ENCODE measurements at regions of chr21 and their contacts with region 1.

Region 1: DNA sequence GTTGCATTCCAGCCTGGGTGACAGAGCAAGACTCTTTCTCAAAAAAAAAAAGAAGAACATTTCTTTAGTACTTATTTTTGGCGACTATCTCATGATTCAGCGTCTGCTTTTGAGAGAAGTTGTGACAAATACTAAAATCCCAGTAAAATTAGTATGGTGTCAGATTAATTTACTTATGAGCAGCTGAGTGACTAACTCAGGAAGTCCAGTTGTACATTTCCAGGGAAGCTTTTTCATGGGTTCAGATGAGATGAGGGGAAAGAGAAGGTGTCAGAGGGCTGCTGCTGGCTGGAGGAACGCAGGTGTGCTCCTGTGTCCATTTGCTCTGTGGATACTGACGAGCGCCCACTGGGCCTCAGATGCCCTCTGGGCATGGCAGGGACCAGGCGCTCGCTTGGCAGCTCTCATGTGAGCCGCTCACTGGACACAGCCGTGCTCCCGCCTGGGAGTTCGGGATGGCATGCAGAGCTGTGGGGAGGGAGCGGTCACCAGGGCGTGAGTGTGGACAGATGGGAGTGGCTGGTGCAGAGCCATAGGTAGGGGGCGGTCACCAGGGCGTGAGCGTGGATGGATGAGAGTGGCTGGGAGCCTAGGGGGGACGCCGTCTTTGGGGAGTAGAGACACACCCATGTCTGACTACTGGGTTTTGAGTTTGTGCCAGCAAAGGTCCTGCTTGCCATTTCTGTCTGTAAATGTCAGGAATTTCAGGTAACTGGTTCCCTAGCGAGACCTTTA is 55.0 kb downstream of the ADARB1 start:
- DNase-seq: peak in 4 of 5 donors; percentile 50 to 79 (median 56)
- ATAC-seq: peak; percentile 63 to 80 (median 66)
- H3K4me3 ChIP-seq: no peak overlapping the region
- H3K27ac ChIP-seq: peak overlapping the region in 11 of 12 donors; percentile 30 to 86 (median 73)
- H3K4me1 ChIP-seq: peaks cover 9 to 67% (median 57%) of the 10 kb centered on the region in 12 donors
- H3K27me3 ChIP-seq: no peaks in the 10 kb centered on the region
- CTCF ChIP-seq: peak in 2 of 12 donors; percentile 8 to 14
- POLR2A ChIP-seq: no peak

Region 2: GRCh38 chr21:44892536-44893277 is 236.6 kb before region 1 on chr21:
- intact Hi-C with region 1: loop called in 1 of 10 experiments (anchors 5 kb)
- DNase-seq: peak in 4 of 5 donors; percentile 63 to 87 (median 68)
- ATAC-seq: peak in 3 of 4 donors; percentile 58 to 79 (median 73)
- H3K4me3 ChIP-seq: no peak overlapping the region
- H3K27ac ChIP-seq: no peak overlapping the region
- H3K4me1 ChIP-seq: peaks cover 0 to 9% (median 0%) of the 10 kb centered on the region in 12 donors
- H3K27me3 ChIP-seq: no peaks in the 10 kb centered on the region
- CTCF ChIP-seq: peak; percentile 77 to 88 (median 86)
- POLR2A ChIP-seq: no peak

Region 3: DNA sequence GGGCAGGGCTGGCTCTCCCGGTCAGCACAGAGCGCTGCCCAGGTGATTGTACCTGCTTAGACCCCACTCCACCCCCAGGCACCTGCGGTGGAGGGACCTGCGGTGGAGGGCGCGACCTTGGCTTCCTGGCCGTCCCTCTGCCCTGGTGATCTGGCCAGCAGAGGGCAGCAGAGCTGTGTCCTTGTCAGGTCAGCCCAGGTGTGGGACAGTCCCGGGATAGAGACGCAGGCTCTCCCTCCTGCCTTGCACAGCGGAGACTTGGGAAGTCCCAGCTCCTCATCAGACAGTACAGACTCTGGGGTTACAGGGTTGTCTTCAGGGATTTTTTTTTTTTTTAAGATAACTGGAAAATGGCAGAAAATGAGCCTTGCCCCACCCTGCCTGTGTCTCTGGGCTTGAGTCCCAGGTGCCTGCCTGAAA is 179.6 kb before region 1 on chr21:
- intact Hi-C with region 1: loop called in 8 of 10 experiments (anchors 2 kb)
- DNase-seq: peak; percentile 89 to 94 (median 90)
- ATAC-seq: peak; percentile 59 to 68 (median 62)
- H3K4me3 ChIP-seq: no peak overlapping the region
- H3K27ac ChIP-seq: peak overlapping the region in 11 of 12 donors; percentile 42 to 96 (median 75)
- H3K4me1 ChIP-seq: peaks cover 0 to 87% (median 47%) of the 10 kb centered on the region in 12 donors
- H3K27me3 ChIP-seq: no peaks in the 10 kb centered on the region
- CTCF ChIP-seq: peak; percentile 90 to 97 (median 94)
- POLR2A ChIP-seq: no peak

Region 4: GRCh38 chr21:45033791-45034555 is 95.4 kb before region 1 on chr21:
- intact Hi-C with region 1: loop called in 1 of 10 experiments (anchors 5 kb)
- DNase-seq: peak in 1 of 5 donors; percentile 26
- ATAC-seq: peak; percentile 23 to 61 (median 44)
- H3K4me3 ChIP-seq: peak overlapping the region in 6 of 12 donors; percentile 4 to 28 (median 24)
- H3K27ac ChIP-seq: peak overlapping the region in 10 of 12 donors; percentile 14 to 55 (median 42)
- H3K4me1 ChIP-seq: peaks cover 5 to 53% (median 30%) of the 10 kb centered on the region in 12 donors
- H3K27me3 ChIP-seq: no peaks in the 10 kb centered on the region
- CTCF ChIP-seq: no peak
- POLR2A ChIP-seq: no peak

Region 5: DNA sequence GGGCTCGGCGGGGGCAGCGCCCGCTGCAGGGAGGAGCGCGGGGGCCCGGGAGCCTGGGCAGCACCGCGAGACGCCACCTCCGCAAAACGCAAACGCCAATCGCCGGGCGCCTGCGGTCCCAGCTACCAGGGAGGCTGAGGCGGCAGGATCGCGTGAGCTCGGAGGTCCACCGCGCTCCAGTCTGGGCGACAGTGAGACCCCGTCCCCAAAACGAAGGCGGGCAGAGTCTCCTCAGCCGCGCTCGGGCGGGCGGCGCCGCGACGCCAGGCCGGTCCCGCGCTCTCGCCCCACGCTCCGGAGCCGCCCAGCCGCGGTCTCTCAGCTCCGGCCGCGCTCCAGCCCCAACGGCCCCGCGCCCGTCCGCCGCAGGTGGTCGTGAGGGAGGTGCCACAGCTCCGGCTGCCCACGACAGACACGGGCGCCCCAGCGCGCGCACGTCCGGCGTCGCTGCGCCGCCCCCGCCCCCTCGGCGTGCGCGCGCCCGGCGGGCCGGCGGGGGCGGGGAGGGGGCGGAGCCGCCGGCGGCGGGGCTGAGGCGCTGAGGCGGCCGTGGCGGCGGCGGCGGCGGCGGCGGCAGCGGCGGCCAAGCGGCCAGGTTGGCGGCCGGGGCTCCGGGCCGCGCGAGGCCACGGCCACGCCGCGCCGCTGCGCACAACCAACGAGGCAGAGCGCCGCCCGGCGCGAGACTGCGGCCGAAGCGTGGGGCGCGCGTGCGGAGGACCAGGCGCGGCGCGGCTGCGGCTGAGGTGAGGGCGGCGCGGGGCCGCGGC is 55.1 kb before region 1 on chr21 and contains the start of gene ADARB1:
- intact Hi-C with region 1: loop called in 5 of 10 experiments (anchors 1 to 5 kb)
- DNase-seq: peak; percentile 68 to 84 (median 76)
- ATAC-seq: peak; percentile 63 to 81 (median 74)
- H3K4me3 ChIP-seq: peak within 1 kb of the TSS; percentile 75 to 100 (median 94)
- H3K27ac ChIP-seq: peak within 1 kb of the TSS; percentile 81 to 98 (median 94)
- H3K4me1 ChIP-seq: peaks cover 0 to 44% (median 13%) of the 10 kb centered on the region in 12 donors
- H3K27me3 ChIP-seq: peaks cover 0 to 5% (median 0%) of the 10 kb centered on the region in 9 donors
- CTCF ChIP-seq: no peak
- POLR2A ChIP-seq: peak in 1 of 2 donors; percentile 82
- total RNA-seq, gene ADARB1: 6.9 to 16.3 (median 12.1) TPM

Region 6: DNA sequence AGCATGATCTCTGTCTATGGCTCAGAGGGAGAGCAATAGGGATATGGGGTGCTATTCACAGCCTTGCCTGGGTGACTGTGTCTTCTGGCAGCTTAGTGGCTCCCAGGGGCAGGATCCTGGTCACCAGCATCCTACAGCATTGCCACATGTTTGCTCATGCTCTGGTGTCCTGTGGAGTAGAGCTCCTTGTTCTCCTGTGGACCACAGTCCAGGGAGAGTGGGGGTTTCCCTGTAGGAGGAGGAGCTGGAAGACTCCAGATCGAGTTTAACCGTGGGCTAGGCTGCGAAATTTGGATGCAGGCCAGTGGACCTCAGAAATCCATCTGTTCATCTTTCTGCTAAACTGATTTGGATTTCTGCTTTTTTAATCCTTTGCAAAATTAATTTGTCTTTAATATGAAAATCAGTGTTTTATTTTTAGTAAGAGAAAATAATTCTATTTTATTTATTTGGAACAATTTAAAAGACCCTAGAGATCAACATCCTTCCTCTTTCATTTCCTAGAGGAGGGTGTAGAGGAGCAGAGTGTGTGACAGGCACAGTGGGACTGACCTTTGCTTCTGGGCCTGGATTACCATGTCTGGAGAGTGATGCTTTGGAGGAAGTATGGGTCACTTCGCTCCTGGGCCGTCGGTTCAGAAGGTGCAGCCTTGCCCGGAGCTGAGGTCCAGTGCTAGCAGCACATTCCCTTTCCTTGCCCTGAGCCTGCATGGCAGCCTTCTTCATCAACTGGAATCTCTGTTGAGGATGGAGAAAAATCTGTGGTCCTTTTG is 37.6 kb before region 1 on chr21:
- intact Hi-C with region 1: loop called in 2 of 10 experiments (anchors 5 kb)
- DNase-seq: no peak
- ATAC-seq: peak in 1 of 4 donors; percentile 47
- H3K4me3 ChIP-seq: no peak overlapping the region
- H3K27ac ChIP-seq: peak overlapping the region in 10 of 12 donors; percentile 12 to 90 (median 80)
- H3K4me1 ChIP-seq: peaks cover 15 to 71% (median 54%) of the 10 kb centered on the region in 12 donors
- H3K27me3 ChIP-seq: no peaks in the 10 kb centered on the region
- CTCF ChIP-seq: no peak
- POLR2A ChIP-seq: no peak

Region 7: GRCh38 chr21:45109831-45110492 is 19.4 kb before region 1 on chr21:
- intact Hi-C with region 1: loop called in 1 of 10 experiments (anchors 2 kb)
- DNase-seq: peak in 1 of 5 donors; percentile 48
- ATAC-seq: peak; percentile 18 to 69 (median 24)
- H3K4me3 ChIP-seq: peak overlapping the region in 9 of 12 donors; percentile 4 to 33 (median 22)
- H3K27ac ChIP-seq: peak overlapping the region in 11 of 12 donors; percentile 25 to 83 (median 71)
- H3K4me1 ChIP-seq: peaks cover 6 to 78% (median 70%) of the 10 kb centered on the region in 12 donors
- H3K27me3 ChIP-seq: no peaks in the 10 kb centered on the region
- CTCF ChIP-seq: no peak
- POLR2A ChIP-seq: no peak